ENCODE measurements at regions of chr20 and their contacts with region 1.

Region 1: GRCh38 chr20:56343861-56344381 is 14.9 kb upstream of the FAM210B start:
- DNase-seq: peak; percentile 81
- CTCF ChIP-seq: peak; percentile 73

Region 2: GRCh38 chr20:54668271-54669039 is 1675.5 kb before region 1 on chr20:
- in situ Hi-C with region 1: loop called (anchors 25 kb)
- DNase-seq: peak; percentile 34
- CTCF ChIP-seq: peak; percentile 55

Region 3: DNA sequence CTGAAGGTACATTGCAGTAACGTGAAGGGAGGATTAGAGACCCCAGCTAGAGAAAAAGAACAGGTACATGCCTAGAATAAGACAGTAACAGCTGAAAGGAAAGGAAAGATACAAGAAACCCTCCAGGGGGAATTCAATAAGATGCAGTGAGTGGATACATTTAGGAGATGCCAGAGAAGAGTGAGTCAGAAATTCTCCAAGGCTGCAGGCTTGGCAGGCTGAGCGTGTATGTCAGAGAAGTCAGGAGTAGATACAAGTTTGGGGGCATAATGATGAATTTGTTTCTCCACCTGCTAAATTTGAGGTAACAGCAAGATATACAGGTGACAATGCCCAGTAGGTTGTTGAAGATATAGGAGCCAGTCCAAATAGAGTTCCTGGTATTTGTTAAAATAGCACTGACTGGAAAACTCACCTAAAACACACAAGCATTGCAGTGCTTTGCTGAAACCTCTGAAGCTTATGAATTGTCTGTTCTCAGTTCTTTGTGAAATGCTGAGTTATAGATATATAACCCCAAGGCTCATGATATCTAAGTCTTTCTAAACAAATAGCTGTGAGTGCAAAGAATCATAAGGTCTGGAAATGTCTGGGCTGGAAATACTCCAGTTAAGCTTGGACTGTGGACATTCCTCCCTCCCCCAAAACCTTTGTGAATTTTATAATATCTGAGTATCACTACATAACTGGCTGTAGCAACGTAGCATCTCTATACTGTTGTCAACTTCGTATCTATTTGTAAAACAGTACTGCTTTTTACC is 407.9 kb before region 1 on chr20:
- in situ Hi-C with region 1: no loop called
- DNase-seq: no peak
- CTCF ChIP-seq: no peak

Region 4: GRCh38 chr20:56151834-56152233 is 192.1 kb before region 1 on chr20:
- in situ Hi-C with region 1: no loop called
- DNase-seq: no peak
- CTCF ChIP-seq: no peak

Region 5: GRCh38 chr20:56453352-56453751 is 109.4 kb after region 1 on chr20:
- in situ Hi-C with region 1: no loop called
- DNase-seq: peak; percentile 68
- CTCF ChIP-seq: no peak

Region 6: DNA sequence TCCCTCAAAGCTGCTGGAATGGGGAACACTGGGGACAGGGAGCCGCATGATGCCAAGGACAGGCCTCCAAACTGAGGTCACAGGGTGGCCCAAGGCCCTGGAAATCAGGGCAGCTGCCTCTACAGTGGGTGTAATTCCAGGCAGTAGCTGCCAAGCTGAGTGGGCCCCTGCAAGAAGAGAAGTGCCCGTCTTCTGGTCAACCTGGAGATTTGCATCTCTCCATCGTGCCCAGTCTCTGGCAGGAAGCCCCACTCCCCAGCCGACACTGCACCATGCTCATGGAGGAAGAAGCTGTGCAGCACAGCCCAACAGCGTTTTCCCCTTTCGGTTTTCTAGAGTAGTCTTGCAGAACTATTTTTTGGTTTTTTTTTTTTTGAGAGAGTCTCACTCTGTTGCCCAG is 178.4 kb after region 1 on chr20:
- in situ Hi-C with region 1: no loop called
- DNase-seq: no peak
- CTCF ChIP-seq: no peak

Measured in GM13976 (cell line).